Motor neuron (in vitro differentiated cells): ENCODE measurements at regions of chr3 and their contacts with region 1.

Region 1: GRCh38 chr3:32947789-32948238 is 3.6 kb upstream of the CCR4 start:
- ATAC-seq: peak; percentile 42 to 99 (median 73)
- H3K4me3 ChIP-seq: no peak overlapping the region
- H3K27ac ChIP-seq: no peak overlapping the region
- H3K4me1 ChIP-seq: no peaks in the 10 kb centered on the region

Region 2: GRCh38 chr3:32733631-32734229 is 214.1 kb before region 1 on chr3:
- in situ Hi-C with region 1: loop called in 2 of 9 experiments (anchors 25 kb)
- ATAC-seq: peak in 4 of 8 experiments; percentile 14 to 54 (median 41)
- H3K4me3 ChIP-seq: no peak overlapping the region
- H3K27ac ChIP-seq: no peak overlapping the region
- H3K4me1 ChIP-seq: no peaks in the 10 kb centered on the region